Activated T-helper 2 cell treated with anti-CD3 and anti-CD28 coated beads, Interferon-gamma antibody, Interleukin-2, Interleukin-4, amounts not matched to agents 10 μg/mL and 5 μg/mL and 100 μg/mL, durations not matched to agents 14 hours and 24 hours and 36 hours (primary cell): ENCODE measurements at regions of chr18 and their contacts with region 1.

Region 1: GRCh38 chr18:42274488-42275137 is 319.6 kb downstream of the PIK3C3 start:
- DNase-seq: no peak
- H3K4me3 Mint-ChIP-seq: no peak overlapping the region
- H3K27ac Mint-ChIP-seq: no peak overlapping the region
- H3K4me1 Mint-ChIP-seq: no peaks in the 10 kb centered on the region
- H3K27me3 Mint-ChIP-seq: no peaks in the 10 kb centered on the region

Region 2: DNA sequence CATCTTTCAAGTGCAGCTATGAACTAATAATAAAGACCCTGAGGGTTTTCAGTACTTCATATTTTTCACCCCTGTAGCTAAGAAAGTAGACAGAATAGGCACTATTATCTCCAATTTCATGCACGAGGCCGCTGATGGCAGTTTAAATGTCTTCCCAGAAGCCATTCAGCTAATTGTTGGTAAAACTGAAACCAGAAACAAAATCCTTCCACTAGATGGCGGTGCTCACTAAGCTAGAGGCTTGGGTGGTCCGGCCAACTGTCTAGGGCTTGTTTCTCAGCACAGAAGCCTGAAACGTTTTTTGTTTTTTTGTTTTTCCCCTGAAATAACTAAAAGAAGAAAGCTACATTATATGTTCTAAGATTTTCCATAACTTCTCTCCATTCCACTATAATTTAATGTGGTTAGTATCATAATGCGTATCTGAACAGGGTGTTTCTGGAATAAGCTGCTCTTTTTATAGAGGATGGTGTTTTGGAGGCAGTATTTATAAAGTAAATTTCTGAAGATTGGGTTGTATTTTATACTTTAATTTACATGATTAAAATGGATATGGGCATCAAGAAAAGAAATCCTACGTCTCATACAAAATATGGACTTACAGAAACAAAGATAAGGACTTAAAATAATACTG is 160.2 kb before region 1 on chr18:
- intact Hi-C with region 1: loop called (anchors 10 kb)
- DNase-seq: peak; percentile 34
- H3K4me3 Mint-ChIP-seq: no peak overlapping the region
- H3K27ac Mint-ChIP-seq: no peak overlapping the region
- H3K4me1 Mint-ChIP-seq: peaks cover 11% of the 10 kb centered on the region
- H3K27me3 Mint-ChIP-seq: peaks cover 14% of the 10 kb centered on the region